HCT116 (cell line): ENCODE measurements at regions of chr19 and their contacts with region 1.

Region 1: GRCh38 chr19:14347999-14348889 is 33.0 kb upstream of the ADGRE5 start:
- DNase-seq: no peak
- ATAC-seq: peak; percentile 82
- H3K4me3 ChIP-seq: peak overlapping the region; percentile 30 to 39
- H3K27ac ChIP-seq: peak overlapping the region; percentile 10; the same call in 1 of the 2 replicates
- H3K4me1 ChIP-seq: peaks cover 10 to 21% of the 10 kb centered on the region in 2 experiments
- H3K27me3 ChIP-seq: no peaks in the 10 kb centered on the region
- CTCF ChIP-seq: peak; percentile 96 to 98 (median 97)
- POLR2A ChIP-seq: no peak
- RAD21 ChIP-seq: peak; percentile 99

Region 2: GRCh38 chr19:14147797-14148605 is 200.2 kb before region 1 on chr19:
- CTCF ChIA-PET with region 1: interaction called, 9 read pairs
- POLR2A ChIA-PET with region 1: no interaction called
- RAD21 ChIA-PET with region 1: no interaction called
- intact Hi-C with region 1: loop called (anchors 1 kb)
- DNase-seq: peak; percentile 36
- ATAC-seq: peak; percentile 88
- H3K4me3 ChIP-seq: no peak overlapping the region
- H3K27ac ChIP-seq: peak overlapping the region; percentile 28; the same call in 1 of the 2 replicates
- H3K4me1 ChIP-seq: peaks cover 5 to 15% of the 10 kb centered on the region in 2 experiments; a peak in 3 of 4 replicates
- H3K27me3 ChIP-seq: no peaks in the 10 kb centered on the region
- CTCF ChIP-seq: peak; percentile 74 to 89 (median 80)
- POLR2A ChIP-seq: no peak
- RAD21 ChIP-seq: peak; percentile 73

Region 3: DNA sequence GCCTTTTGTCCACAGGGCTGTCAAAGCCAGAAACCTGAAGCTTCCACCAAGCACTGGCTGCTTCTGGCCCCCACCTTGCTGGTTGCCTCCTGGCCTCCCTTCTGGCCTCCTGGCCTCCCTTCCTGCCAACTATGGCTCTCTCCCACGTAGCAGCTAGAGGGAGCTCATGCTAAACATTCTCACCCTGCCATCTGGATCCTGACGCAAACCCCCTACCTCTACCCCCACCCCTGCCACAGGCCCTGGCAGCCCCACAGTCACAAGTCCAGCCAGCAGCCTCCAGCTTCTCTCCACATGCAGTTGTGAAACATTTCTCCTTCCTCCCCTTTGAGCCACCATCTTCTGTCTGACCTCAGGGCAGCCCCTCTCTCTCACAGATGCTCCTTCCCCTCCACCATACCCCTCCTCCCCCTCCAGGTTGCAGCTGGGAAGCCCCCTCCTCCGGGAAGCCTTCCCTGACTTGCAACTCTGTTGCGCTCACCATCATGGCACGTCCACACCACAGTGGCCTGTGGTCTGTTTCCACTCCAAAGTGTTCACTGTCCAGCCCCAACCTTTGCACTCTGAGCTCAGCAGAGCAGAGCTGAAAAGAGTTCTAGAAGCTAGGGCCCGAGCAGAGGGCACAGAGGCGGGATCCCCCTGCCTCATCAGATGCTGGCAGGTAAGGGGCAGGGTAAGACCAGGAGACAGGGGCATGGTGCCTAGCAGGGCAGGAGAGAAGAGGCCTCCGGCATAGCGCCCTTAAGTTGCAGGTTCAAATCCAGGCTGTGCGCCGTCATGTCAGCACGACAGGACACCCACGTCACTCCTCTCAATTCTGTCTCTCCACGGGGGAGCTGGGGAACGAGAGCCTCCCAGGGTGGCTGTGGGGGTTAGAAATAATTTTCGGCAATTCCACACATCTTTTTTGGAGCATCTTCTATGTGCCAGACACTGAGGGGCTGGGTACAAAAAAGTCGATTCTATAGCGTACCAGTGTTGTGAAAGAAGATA is 149.6 kb before region 1 on chr19:
- CTCF ChIA-PET with region 1: interaction called, 32 read pairs
- POLR2A ChIA-PET with region 1: no interaction called
- RAD21 ChIA-PET with region 1: interaction called in 1 of 2 experiments, 5 read pairs
- intact Hi-C with region 1: loop called (anchors 1 kb)
- DNase-seq: no peak
- ATAC-seq: 0 out of 2 replicates have a peak, but pooled peaks have one; percentile 23
- H3K4me3 ChIP-seq: no peak overlapping the region
- H3K27ac ChIP-seq: peak overlapping the region; percentile 3; the same call in 1 of the 2 replicates
- H3K4me1 ChIP-seq: peaks cover 5 to 9% of the 10 kb centered on the region in 2 experiments; a peak in 3 of 4 replicates
- H3K27me3 ChIP-seq: no peaks in the 10 kb centered on the region
- CTCF ChIP-seq: peak; percentile 18 to 40 (median 35); a peak in 3 of 6 replicates
- POLR2A ChIP-seq: no peak
- RAD21 ChIP-seq: peak; percentile 31; the same call in 1 of the 2 replicates

Region 4: DNA sequence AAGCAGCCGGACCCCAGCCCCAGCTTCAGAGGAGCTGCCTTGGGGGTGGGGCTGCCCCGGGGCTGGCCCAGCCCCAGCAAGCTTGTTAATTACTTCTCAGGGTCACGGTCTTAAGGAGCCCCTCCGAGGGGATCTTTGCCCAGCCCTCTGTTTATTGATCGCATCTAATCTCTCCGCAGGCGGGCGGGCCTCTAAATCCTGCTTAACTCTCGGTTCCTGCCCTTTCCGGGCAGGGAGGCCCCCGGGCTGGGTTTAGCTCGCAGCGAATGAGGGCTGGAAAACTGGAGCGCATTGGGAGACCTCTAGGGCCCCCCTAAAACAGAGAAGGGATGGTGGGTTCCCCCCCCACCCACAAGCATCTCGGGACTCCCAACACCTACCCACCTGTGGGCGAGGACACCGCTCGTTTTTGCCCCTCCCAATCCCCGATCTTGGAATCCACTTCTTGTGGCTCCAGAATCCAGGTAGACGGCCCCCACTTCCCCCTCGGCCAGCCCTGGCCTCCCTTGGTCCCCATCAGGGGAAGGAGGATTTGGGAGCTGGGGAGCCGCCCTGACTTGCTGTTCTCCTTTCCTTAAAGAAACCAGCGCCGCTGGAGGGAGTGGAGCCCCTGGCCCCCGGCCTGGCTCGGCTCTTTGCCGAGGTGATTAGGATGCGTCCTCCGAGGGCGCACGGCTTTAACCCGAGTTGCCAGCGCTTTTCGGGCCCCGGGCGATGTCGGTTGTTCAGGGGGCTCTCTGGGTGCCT is 82.8 kb before region 1 on chr19:
- CTCF ChIA-PET with region 1: no interaction called
- POLR2A ChIA-PET with region 1: no interaction called
- RAD21 ChIA-PET with region 1: no interaction called
- intact Hi-C with region 1: loop called (anchors 2 kb)
- DNase-seq: no peak
- ATAC-seq: no peak
- H3K4me3 ChIP-seq: no peak overlapping the region
- H3K27ac ChIP-seq: no peak overlapping the region
- H3K4me1 ChIP-seq: no peaks in the 10 kb centered on the region
- H3K27me3 ChIP-seq: no peaks in the 10 kb centered on the region
- CTCF ChIP-seq: no peak
- POLR2A ChIP-seq: no peak
- RAD21 ChIP-seq: no peak

Region 5: DNA sequence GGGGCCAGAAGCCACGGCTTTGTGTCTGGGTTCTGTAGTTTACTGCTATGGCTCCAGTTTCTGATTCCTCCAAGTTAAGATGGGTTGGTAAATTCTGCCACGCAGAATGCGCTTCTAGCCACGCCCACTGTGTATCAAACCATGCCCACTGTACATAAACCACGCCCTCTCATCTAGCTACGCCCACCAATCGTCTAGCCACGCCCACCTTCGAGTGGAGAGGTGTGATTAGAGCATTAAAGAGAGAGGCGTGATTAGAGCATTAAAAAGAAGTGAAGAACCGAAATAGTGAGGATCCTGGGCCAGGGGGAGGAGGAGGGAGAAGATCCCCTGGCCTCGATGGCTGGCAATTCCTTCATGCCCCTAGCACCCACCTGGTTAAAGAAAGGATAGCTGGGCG is 10.7 kb before region 1 on chr19:
- CTCF ChIA-PET with region 1: interaction called, 18 read pairs
- POLR2A ChIA-PET with region 1: interaction called, 3 read pairs
- RAD21 ChIA-PET with region 1: interaction called in 1 of 2 experiments, 5 read pairs
- intact Hi-C with region 1: no loop called
- DNase-seq: peak; percentile 79
- ATAC-seq: peak; percentile 80
- H3K4me3 ChIP-seq: no peak overlapping the region
- H3K27ac ChIP-seq: 0 out of 2 replicates have a peak overlapping the region, but pooled peaks have one; percentile 10
- H3K4me1 ChIP-seq: peaks cover 8 to 25% of the 10 kb centered on the region in 2 experiments; a peak in 3 of 4 replicates
- H3K27me3 ChIP-seq: no peaks in the 10 kb centered on the region
- CTCF ChIP-seq: no peak
- POLR2A ChIP-seq: no peak
- RAD21 ChIP-seq: no peak